T-cell (primary cell): ENCODE measurements at regions of chr16 and their contacts with region 1.

Region 1: GRCh38 chr16:71883849-71884638 is at the start of gene ZNF821:
- DNase-seq: peak; percentile 32 to 86 (median 71)
- ATAC-seq: peak; percentile 41 to 57 (median 46)
- H3K4me3 ChIP-seq: peak within 1 kb of the TSS; percentile 81 to 87
- H3K4me3 Mint-ChIP-seq: peak within 1 kb of the TSS; percentile 92 to 98 (median 93)
- H3K27ac ChIP-seq: peak within 1 kb of the TSS; percentile 86
- H3K27ac Mint-ChIP-seq: peak within 1 kb of the TSS; percentile 91 to 94
- H3K4me1 ChIP-seq: peaks cover 25 to 42% of the 10 kb centered on the region in 2 experiments
- H3K4me1 Mint-ChIP-seq: peaks cover 49 to 54% (median 51%) of the 10 kb centered on the region in 3 donors
- H3K27me3 ChIP-seq: no peaks in the 10 kb centered on the region
- H3K27me3 Mint-ChIP-seq: no peaks in the 10 kb centered on the region
- total RNA-seq, gene ZNF821: 8.0 to 17.9 (median 9.3) TPM

Region 2: GRCh38 chr16:71808593-71809459 is 75.2 kb before region 1 on chr16 and contains the start of gene AP1G1:
- CTCF ChIA-PET with region 1: interaction called, 4 to 20 read pairs
- POLR2A ChIA-PET with region 1: interaction called, 8 to 9 read pairs
- DNase-seq: peak; percentile 82 to 98 (median 93)
- ATAC-seq: peak; percentile 92 to 95 (median 94)
- H3K4me3 ChIP-seq: peak within 1 kb of the TSS; percentile 93 to 98
- H3K4me3 Mint-ChIP-seq: peak within 1 kb of the TSS; percentile 94 to 99 (median 98)
- H3K27ac ChIP-seq: peak within 1 kb of the TSS; percentile 99
- H3K27ac Mint-ChIP-seq: peak within 1 kb of the TSS; percentile 99 to 100
- H3K4me1 ChIP-seq: peaks cover 17 to 44% of the 10 kb centered on the region in 2 experiments
- H3K4me1 Mint-ChIP-seq: peaks cover 35 to 48% (median 39%) of the 10 kb centered on the region in 3 donors
- H3K27me3 ChIP-seq: no peaks in the 10 kb centered on the region
- H3K27me3 Mint-ChIP-seq: no peaks in the 10 kb centered on the region
- total RNA-seq, gene AP1G1: 96.6 to 152 (median 101) TPM

Region 3: GRCh38 chr16:71845639-71846430 is 38.2 kb before region 1 on chr16 and contains the start of gene ATXN1L:
- CTCF ChIA-PET with region 1: interaction called, 5 to 19 read pairs
- POLR2A ChIA-PET with region 1: interaction called, 3 to 6 read pairs
- DNase-seq: peak; percentile 80 to 96 (median 88)
- ATAC-seq: peak; percentile 93 to 95 (median 94)
- H3K4me3 ChIP-seq: peak within 1 kb of the TSS; percentile 91
- H3K4me3 Mint-ChIP-seq: peak within 1 kb of the TSS; percentile 91 to 94 (median 92)
- H3K27ac ChIP-seq: peak within 1 kb of the TSS; percentile 91
- H3K27ac Mint-ChIP-seq: peak within 1 kb of the TSS; percentile 92 to 95
- H3K4me1 ChIP-seq: peaks cover 13 to 18% of the 10 kb centered on the region in 2 experiments
- H3K4me1 Mint-ChIP-seq: peaks cover 32 to 44% (median 42%) of the 10 kb centered on the region in 3 donors
- H3K27me3 ChIP-seq: no peaks in the 10 kb centered on the region
- H3K27me3 Mint-ChIP-seq: no peaks in the 10 kb centered on the region
- total RNA-seq, gene ATXN1L: 26.8 to 44.0 (median 29.3) TPM

Region 4: DNA sequence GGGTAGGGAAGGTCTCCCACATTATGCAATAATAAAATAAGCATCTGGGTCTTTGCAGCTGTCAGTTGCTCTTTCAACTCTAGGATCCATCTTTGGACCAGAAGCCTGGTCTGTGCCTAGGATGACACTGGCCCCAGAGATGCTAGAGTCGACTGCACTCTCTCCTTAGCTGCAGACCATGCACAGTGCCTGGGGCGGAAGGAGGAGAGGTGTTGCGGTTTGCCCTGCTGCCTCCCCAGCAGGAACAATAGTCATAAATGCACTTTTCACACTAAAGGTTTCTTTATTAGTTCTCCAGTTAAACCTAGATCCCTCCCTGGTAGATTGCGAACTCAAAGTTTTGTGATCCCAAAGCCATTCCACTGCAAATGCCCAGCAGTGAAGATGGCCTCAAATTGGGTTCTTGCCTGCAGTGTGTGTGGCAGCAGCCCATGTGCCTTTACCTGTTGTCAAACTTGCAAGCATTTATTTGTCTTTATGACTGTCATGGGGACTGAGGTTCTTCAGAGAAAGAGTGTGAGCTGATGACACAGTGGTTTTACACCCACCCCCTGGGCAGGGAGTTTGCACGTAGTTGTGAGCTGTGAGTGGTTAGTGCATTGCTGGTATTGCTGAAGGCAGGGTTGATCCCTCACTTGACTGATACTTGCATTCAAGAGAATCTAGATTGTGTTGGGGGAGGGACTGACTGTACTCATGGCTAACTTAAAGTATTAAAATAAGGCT is 27.9 kb before region 1 on chr16:
- CTCF ChIA-PET with region 1: interaction called in 1 of 2 experiments, 12 read pairs
- POLR2A ChIA-PET with region 1: interaction called in 1 of 2 experiments, 6 read pairs
- DNase-seq: peak in 21 of 35 experiments; percentile 2 to 65 (median 23)
- ATAC-seq: peak; percentile 35 to 71 (median 58)
- H3K4me3 ChIP-seq: no peak overlapping the region
- H3K4me3 Mint-ChIP-seq: peak overlapping the region in 1 of 3 donors; percentile 47
- H3K27ac ChIP-seq: peak overlapping the region; percentile 54
- H3K27ac Mint-ChIP-seq: peak overlapping the region; percentile 65 to 79
- H3K4me1 ChIP-seq: peaks cover 0 to 67% of the 10 kb centered on the region in 2 experiments
- H3K4me1 Mint-ChIP-seq: peaks cover 53 to 65% (median 59%) of the 10 kb centered on the region in 3 donors
- H3K27me3 ChIP-seq: no peaks in the 10 kb centered on the region
- H3K27me3 Mint-ChIP-seq: no peaks in the 10 kb centered on the region

Region 5: DNA sequence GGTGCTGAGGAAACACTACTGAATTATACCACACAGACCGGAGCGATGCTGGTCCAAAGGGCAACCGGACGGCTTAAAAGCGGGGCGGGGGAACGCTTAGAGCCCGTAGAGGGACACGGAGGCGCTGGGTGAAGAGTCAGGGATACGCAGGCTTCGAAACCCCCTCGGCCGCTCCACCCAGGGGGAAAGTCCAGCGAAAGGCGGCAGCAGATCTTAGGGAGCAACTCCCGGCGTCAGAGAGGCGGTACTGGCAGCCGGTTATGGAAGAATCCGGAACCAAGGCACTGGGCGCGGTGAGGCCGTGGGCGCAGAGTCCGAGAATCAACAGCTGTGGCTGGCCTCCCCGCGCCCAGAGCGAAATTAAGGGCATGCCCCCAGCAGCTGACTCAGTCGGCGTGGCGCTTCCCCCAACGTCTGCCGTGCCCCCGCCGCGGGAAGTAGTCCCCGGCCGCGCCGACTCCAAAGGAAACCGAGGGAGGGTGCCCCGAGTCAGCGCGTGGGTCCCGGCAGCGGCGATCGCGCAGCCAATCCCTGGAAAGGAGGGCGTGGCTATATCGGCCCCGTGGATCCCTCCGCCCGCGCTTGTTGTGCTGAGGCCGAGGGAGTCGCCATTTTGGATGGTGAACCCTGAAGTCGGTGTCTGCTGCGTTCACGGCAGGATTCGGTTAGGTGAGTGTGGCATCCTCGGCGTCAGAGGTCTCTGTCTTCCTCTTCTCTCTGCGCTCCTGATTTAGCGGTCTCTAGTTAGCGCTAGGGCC is 11.1 kb after region 1 on chr16 and contains the start of gene IST1:
- CTCF ChIA-PET with region 1: interaction called, 6 to 12 read pairs
- POLR2A ChIA-PET with region 1: interaction called, 4 read pairs
- DNase-seq: peak; percentile 94 to 99 (median 97)
- ATAC-seq: peak; percentile 89 to 96 (median 92)
- H3K4me3 ChIP-seq: peak within 1 kb of the TSS; percentile 70 to 98
- H3K4me3 Mint-ChIP-seq: peak within 1 kb of the TSS; percentile 96 to 98 (median 96)
- H3K27ac ChIP-seq: peak within 1 kb of the TSS; percentile 86
- H3K27ac Mint-ChIP-seq: peak within 1 kb of the TSS; percentile 95 to 96
- H3K4me1 ChIP-seq: peaks cover 14 to 42% of the 10 kb centered on the region in 2 experiments
- H3K4me1 Mint-ChIP-seq: peaks cover 35 to 46% (median 40%) of the 10 kb centered on the region in 3 donors
- H3K27me3 ChIP-seq: no peaks in the 10 kb centered on the region
- H3K27me3 Mint-ChIP-seq: no peaks in the 10 kb centered on the region
- total RNA-seq, gene IST1: 249 to 278 (median 263) TPM

Region 6: GRCh38 chr16:71995038-71995437 is 111.0 kb after region 1 on chr16:
- CTCF ChIA-PET with region 1: no interaction called
- POLR2A ChIA-PET with region 1: no interaction called
- DNase-seq: no peak
- ATAC-seq: no peak
- H3K4me3 ChIP-seq: no peak overlapping the region
- H3K4me3 Mint-ChIP-seq: no peak overlapping the region
- H3K27ac ChIP-seq: no peak overlapping the region
- H3K27ac Mint-ChIP-seq: no peak overlapping the region
- H3K4me1 ChIP-seq: no peaks in the 10 kb centered on the region
- H3K4me1 Mint-ChIP-seq: peaks cover 0 to 5% (median 2%) of the 10 kb centered on the region in 3 donors
- H3K27me3 ChIP-seq: peaks cover 0 to 9% of the 10 kb centered on the region in 2 experiments
- H3K27me3 Mint-ChIP-seq: peaks cover 14 to 23% of the 10 kb centered on the region in 2 donors

Region 7: GRCh38 chr16:72021043-72021442 is 137.0 kb after region 1 on chr16:
- CTCF ChIA-PET with region 1: no interaction called
- POLR2A ChIA-PET with region 1: no interaction called
- DNase-seq: no peak
- ATAC-seq: no peak
- H3K4me3 ChIP-seq: no peak overlapping the region
- H3K4me3 Mint-ChIP-seq: no peak overlapping the region
- H3K27ac ChIP-seq: no peak overlapping the region
- H3K27ac Mint-ChIP-seq: no peak overlapping the region
- H3K4me1 ChIP-seq: no peaks in the 10 kb centered on the region
- H3K4me1 Mint-ChIP-seq: no peaks in the 10 kb centered on the region
- H3K27me3 ChIP-seq: no peaks in the 10 kb centered on the region
- H3K27me3 Mint-ChIP-seq: no peaks in the 10 kb centered on the region